Heart left ventricle (tissue), 16 donors: ENCODE measurements at regions of chr1 and their contacts with region 1.

Region 1: GRCh38 chr1:212179394-212180076 is 105.7 kb upstream of the PPP2R5A start:
- DNase-seq: no peak
- ATAC-seq: peak in 1 of 4 donors; percentile 22
- H3K4me3 ChIP-seq: no peak overlapping the region
- H3K27ac ChIP-seq: no peak overlapping the region
- H3K4me1 ChIP-seq: peaks cover 0 to 19% (median 2%) of the 10 kb centered on the region in 12 donors
- H3K27me3 ChIP-seq: no peaks in the 10 kb centered on the region
- CTCF ChIP-seq: no peak
- POLR2A ChIP-seq: no peak

Region 2: DNA sequence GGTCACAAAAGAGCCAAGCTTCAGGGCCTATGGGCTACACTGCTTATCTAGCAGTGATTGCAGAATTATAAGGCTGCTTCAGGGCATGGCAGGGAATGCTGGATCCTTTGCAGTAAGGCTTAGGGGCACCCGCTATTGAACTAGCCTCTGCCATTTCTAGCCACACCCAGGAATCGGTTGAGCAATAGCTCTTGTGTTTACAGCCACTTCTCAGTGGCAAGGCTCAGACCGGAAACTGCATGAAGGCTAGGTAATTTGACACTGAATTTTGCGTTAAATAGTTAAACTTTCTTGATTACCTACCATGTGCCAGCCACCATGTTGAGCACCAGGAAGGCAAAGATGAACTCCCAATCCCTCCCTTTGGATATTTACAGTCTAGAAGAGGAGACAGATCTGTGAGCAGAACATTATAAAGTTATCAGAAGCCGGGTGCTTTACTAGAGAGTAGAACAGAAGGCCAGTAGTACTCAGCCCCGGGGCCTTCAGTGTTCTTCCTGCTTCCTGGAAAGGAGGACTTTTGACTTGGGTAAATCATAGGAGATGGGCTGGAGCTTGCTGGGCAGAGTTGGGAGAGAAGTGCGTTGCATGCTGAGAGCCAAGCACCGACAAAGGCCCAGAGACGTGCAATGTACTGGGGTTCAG is 250.4 kb before region 1 on chr1:
- intact Hi-C with region 1: no loop called
- DNase-seq: no peak
- ATAC-seq: peak in 1 of 4 donors; percentile 30
- H3K4me3 ChIP-seq: no peak overlapping the region
- H3K27ac ChIP-seq: peak overlapping the region in 1 of 12 donors; percentile 72
- H3K4me1 ChIP-seq: peaks cover 0 to 42% (median 1%) of the 10 kb centered on the region in 12 donors
- H3K27me3 ChIP-seq: peaks cover 0 to 3% (median 0%) of the 10 kb centered on the region in 9 donors
- CTCF ChIP-seq: no peak
- POLR2A ChIP-seq: no peak

Region 3: GRCh38 chr1:212152308-212152693 is 27.2 kb before region 1 on chr1:
- intact Hi-C with region 1: loop called in 1 of 10 experiments (anchors 2 kb)
- DNase-seq: no peak
- ATAC-seq: no peak
- H3K4me3 ChIP-seq: peak overlapping the region in 1 of 12 donors; percentile 24
- H3K27ac ChIP-seq: peak overlapping the region in 1 of 12 donors; percentile 4
- H3K4me1 ChIP-seq: peaks cover 0 to 21% (median 8%) of the 10 kb centered on the region in 12 donors
- H3K27me3 ChIP-seq: no peaks in the 10 kb centered on the region
- CTCF ChIP-seq: no peak
- POLR2A ChIP-seq: no peak

Region 4: DNA sequence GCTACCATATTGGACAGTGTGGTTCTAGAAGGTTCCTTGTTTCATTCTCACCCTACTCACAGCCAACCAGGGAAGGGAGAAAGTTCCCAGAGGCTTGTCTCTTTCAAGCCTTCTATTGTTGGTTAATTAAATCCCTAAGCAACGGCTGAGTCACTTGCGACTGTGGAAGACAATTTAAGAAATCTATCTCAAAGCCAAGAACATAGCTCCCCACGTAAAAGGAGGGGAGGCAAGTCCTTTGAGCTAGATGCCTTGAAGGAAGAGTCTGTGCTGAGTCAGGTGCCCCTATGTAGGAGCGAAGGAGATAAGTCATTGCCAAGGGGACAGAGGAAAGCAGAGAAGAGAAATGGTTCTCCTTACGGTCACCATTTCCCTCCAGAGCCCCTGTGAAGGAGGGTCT is 26.3 kb after region 1 on chr1:
- intact Hi-C with region 1: no loop called
- DNase-seq: no peak
- ATAC-seq: no peak
- H3K4me3 ChIP-seq: no peak overlapping the region
- H3K27ac ChIP-seq: no peak overlapping the region
- H3K4me1 ChIP-seq: peaks cover 0 to 20% (median 3%) of the 10 kb centered on the region in 12 donors
- H3K27me3 ChIP-seq: no peaks in the 10 kb centered on the region
- CTCF ChIP-seq: no peak
- POLR2A ChIP-seq: no peak

Region 5: GRCh38 chr1:212488397-212489283 is 309.1 kb after region 1 on chr1:
- intact Hi-C with region 1: no loop called
- DNase-seq: peak in 2 of 5 donors; percentile 29 to 41
- ATAC-seq: peak; percentile 41 to 76 (median 68)
- H3K4me3 ChIP-seq: no peak overlapping the region
- H3K27ac ChIP-seq: peak overlapping the region in 3 of 12 donors; percentile 42 to 76 (median 51)
- H3K4me1 ChIP-seq: peaks cover 0 to 48% (median 8%) of the 10 kb centered on the region in 12 donors
- H3K27me3 ChIP-seq: no peaks in the 10 kb centered on the region
- CTCF ChIP-seq: no peak
- POLR2A ChIP-seq: no peak